ENCODE measurements at regions of chr10 and their contacts with region 1.

Region 1: GRCh38 chr10:89414146-89414878 is at the start of gene IFIT5:
- DNase-seq: peak; percentile 91
- H3K4me3 Mint-ChIP-seq: peak within 1 kb of the TSS; percentile 92
- H3K27ac Mint-ChIP-seq: peak within 1 kb of the TSS; percentile 95
- H3K4me1 Mint-ChIP-seq: peaks cover 46% of the 10 kb centered on the region
- H3K27me3 Mint-ChIP-seq: no peaks in the 10 kb centered on the region
- total RNA-seq, gene IFIT5: 8.5 and 9.5 TPM in 2 replicates

Region 2: DNA sequence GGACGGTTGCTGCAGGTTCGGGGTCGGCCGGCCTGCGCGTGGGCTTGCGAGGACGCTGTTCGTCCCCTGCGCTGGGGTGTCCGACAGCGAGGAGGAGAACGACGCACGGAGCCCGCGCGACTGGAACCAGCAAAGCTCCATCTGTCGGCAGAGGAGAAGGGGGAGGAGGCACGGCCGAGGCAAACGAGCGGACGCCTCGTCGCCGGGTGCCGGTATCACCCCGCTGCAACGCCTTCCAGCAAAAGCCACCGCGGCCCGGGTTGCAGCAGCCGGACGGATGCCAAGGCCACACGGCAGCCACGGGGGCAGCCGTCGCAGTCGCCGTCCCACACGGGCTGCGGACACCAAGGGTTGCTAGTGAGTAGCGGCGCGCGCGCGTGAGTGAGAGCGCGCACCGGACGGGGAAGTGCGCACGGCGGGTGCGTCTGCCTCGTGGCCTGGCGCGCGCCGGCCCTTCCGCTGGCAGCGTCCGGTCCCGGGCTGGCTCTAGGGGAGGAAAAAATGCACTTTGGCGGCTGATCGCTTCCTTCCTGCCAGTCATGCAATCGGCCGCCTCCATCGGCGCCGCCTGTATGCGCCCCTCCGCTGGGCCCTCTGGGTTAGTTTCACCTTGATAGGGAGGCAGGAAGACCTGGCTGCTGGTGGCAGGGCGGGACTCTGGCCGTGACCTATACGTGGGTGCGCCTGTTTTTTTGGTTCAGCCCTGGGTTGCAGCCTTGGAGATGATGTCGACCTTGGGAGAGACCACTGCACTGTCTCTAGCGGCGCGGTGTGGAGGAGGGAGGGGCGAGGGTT is 533.8 kb before region 1 on chr10:
- intact Hi-C with region 1: loop called (anchors 5 kb)
- DNase-seq: peak; percentile 92
- H3K4me3 Mint-ChIP-seq: peak overlapping the region; percentile 96
- H3K27ac Mint-ChIP-seq: peak overlapping the region; percentile 99
- H3K4me1 Mint-ChIP-seq: peaks cover 59% of the 10 kb centered on the region
- H3K27me3 Mint-ChIP-seq: no peaks in the 10 kb centered on the region

Region 3: DNA sequence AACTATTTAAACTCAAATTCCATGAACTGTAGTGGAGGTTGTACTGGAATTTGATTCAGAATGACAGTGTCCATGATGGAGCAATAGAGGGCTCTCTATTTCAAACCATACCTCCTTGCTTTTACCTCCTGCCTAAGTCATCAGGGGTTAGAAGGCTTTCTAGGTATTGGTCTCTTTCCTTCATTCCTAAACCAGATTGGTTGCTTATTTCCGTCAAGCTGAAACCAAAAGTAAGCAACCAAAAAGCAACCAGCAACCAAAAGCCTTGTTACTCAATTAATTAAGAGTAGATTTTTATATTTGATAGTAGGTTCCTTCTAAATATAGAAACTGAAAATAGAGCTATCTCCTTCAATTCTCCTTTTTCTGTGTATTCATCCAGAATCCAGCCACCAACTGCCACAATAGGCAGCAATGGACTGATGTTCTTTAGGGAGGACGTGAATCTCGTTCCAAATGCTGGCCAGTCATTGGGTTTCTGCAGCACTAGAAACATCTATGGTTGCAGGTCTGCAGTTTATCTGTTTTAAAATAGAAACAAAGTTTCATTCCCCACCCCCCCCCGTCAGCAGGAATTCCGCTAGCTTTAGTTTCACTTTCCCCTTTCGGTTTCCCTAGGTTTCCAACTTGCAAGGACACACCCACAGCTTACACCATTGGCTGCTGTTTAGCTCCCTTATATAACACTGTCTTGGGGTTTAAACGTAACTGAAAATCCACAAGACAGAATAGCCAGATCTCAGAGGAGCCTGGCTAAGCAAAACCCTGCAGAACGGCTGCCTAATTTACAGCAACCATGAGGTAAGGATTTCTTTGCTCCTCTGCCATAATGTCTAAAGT is 22.2 kb before region 1 on chr10 and contains the start of gene IFIT1:
- intact Hi-C with region 1: loop called (anchors 1 kb)
- DNase-seq: peak; percentile 88
- H3K4me3 Mint-ChIP-seq: peak within 1 kb of the TSS; percentile 82
- H3K27ac Mint-ChIP-seq: peak within 1 kb of the TSS; percentile 67
- H3K4me1 Mint-ChIP-seq: peaks cover 31% of the 10 kb centered on the region
- H3K27me3 Mint-ChIP-seq: peaks cover 2% of the 10 kb centered on the region
- total RNA-seq, gene IFIT1: 0.58 and 1.0 TPM in 2 replicates

Region 4: DNA sequence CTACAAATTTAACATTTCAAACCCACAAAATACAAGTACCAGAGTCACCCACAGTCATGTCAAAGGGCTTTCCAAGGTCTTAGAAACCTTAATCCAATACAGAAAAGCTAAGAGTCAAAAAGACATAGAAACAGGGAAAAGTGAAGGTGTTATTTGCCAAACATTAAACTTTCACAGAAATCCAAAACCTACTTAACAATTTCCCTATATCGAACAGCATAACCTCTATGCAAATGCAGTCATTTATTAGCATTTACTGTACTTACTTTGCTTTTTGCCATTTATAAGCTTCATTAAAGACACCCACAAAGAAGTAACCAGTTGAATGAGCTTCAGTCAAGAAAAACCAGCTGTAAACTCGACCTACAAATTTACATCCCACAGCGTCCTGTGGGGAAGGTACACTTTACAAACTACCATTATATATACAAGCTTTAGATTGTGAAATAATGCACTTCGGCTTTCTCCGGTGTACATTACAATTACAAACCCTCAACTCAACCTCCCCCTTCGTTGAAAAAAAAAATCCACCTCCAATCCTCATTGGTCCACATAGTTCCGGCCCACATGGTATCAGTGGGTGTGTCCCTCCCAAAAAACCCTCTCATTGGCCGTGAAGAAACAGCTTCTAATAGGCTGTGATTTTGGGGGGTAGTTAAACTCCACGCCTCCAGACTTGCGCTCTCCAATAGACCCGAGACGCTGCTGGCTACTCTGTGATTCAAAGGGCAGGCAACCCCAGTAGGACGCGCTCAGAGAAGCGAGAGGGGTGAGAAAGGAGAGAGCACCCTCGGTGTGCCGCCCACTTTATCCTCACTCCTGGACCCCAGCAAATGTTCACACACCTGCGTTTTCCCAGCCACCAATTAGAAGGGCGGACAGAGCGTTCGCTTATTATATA is 229.4 kb after region 1 on chr10:
- intact Hi-C with region 1: loop called (anchors 2 kb)
- DNase-seq: peak; percentile 93
- H3K4me3 Mint-ChIP-seq: no peak overlapping the region
- H3K27ac Mint-ChIP-seq: no peak overlapping the region
- H3K4me1 Mint-ChIP-seq: peaks cover 10% of the 10 kb centered on the region
- H3K27me3 Mint-ChIP-seq: peaks cover 17% of the 10 kb centered on the region